ENCODE measurements at regions of chr14 and their contacts with region 1.

Region 1: GRCh38 chr14:95534299-95535225 is at the start of gene GLRX5:
- DNase-seq: peak; percentile 99
- H3K4me3 Mint-ChIP-seq: peak within 1 kb of the TSS; percentile 91
- H3K27ac Mint-ChIP-seq: peak within 1 kb of the TSS; percentile 95
- H3K4me1 Mint-ChIP-seq: peaks cover 49% of the 10 kb centered on the region
- H3K27me3 Mint-ChIP-seq: no peaks in the 10 kb centered on the region
- total RNA-seq, gene GLRX5: 43.7 and 45.6 TPM in 2 replicates

Region 2: GRCh38 chr14:94728950-94729349 is 805.6 kb before region 1 on chr14:
- intact Hi-C with region 1: no loop called
- DNase-seq: no peak
- H3K4me3 Mint-ChIP-seq: no peak overlapping the region
- H3K27ac Mint-ChIP-seq: no peak overlapping the region
- H3K4me1 Mint-ChIP-seq: no peaks in the 10 kb centered on the region
- H3K27me3 Mint-ChIP-seq: peaks cover 5% of the 10 kb centered on the region

Region 3: DNA sequence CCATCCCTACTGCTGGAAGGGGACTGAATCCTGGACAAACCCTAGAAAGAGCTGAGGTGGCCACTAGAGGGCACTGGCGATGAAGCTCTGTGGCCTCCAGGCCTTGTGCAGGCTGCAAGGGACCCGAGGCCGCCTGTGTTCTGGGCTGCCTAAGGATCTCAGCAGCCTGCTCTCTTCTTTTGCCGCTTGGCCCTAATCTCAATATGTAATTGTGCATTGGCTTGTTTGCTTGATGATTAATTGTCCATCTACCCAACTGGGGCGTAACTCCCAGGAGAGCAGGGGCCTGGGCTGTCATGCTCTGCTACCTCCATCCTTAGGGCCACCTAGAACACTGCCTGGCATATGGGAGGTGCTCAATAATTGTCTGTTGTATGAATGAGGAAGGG is 91.9 kb before region 1 on chr14:
- intact Hi-C with region 1: loop called (anchors 1 kb)
- DNase-seq: peak; percentile 91
- H3K4me3 Mint-ChIP-seq: no peak overlapping the region
- H3K27ac Mint-ChIP-seq: peak overlapping the region; percentile 5
- H3K4me1 Mint-ChIP-seq: peaks cover 3% of the 10 kb centered on the region
- H3K27me3 Mint-ChIP-seq: no peaks in the 10 kb centered on the region

Region 4: DNA sequence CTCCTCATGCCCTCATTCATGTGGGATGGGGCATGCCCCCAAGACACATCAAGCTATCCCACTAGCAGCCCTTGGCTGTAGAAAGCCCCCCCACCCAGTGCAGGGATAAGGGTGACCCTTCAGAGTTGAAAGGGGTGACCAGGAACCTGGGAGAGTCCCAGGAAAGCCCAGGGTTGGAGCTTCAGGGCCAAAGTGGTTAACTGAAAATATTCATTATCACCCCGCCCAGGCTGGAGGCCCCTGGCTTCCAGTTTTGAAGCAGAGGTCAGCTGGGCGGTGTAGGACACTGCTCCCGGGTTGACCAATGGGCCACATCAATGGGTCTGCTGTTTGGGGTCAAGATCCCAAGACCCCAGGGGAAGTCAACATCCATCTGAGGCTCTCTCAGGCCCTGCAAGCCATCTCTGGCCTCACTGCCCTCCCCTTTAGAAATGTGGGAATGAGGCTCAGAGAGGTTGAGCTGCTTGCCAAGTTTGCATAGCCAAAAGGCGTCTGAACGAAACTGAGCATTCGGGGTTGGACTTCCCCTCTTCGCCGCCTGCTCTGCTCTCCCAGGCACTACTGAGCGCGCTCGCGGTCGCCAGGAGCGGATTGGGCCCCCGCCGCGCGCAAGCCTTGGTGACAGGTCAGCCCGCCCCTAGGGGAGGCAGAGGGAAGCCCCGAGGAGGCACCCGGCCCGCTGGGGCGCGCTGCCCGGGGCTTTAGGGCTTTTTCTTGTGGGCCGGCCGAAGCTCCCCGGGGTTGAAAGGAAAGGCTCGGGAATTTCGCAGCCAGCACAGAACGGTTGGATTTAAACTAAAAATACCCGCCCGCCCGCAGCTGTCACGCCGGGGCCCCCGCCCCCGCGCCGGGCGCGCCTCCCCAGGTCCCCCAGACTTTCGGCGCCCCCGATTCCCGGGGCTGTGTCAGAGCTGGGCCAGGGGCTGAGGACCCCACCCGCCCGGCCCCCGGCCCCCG is 18.7 kb before region 1 on chr14:
- intact Hi-C with region 1: loop called (anchors 1 kb)
- DNase-seq: peak; percentile 96
- H3K4me3 Mint-ChIP-seq: peak overlapping the region; percentile 95
- H3K27ac Mint-ChIP-seq: peak overlapping the region; percentile 90
- H3K4me1 Mint-ChIP-seq: peaks cover 60% of the 10 kb centered on the region
- H3K27me3 Mint-ChIP-seq: no peaks in the 10 kb centered on the region

Region 5: DNA sequence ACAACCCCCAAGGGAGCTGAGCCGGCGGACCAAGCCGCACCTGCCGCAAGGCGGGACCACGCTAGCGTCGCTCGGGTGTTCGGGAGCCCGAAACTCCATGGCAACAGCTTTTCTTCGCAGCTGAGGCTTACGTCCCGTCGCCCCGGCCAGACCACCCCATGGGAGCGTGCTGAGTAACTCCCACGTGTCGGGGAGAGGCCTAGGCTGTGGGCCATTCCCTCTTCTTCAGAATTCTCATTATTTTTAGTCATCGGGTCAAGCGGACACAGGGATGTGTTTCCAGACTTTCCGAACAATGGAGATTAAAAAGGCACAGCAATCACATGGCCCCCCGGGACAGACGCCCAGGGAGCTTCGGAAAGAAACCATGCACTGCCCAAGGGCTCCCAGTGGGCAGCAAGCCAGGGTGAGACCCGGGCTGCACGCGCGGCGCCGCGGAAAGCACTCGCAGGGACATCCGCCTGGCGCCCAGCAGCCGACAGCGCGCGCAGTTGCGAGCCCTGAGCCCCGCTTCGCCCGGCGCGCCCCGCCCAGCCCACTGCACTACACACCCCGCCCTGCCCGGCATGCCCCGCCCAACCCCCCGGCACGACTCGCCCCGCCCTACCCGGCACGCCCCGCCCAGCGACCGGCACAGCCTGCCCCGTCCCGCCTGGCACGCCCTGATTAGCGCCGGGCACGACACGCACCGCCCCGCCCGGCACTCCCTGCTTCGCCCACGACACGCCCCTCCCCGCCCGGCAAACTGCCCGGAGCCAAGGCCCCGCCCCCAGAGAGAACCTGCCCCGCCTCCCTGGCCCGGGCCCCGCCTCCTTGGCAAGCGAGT is 856.9 kb after region 1 on chr14:
- intact Hi-C with region 1: loop called (anchors 1 kb)
- DNase-seq: peak; percentile 100
- H3K4me3 Mint-ChIP-seq: peak overlapping the region; percentile 91
- H3K27ac Mint-ChIP-seq: peak overlapping the region; percentile 77
- H3K4me1 Mint-ChIP-seq: peaks cover 9% of the 10 kb centered on the region
- H3K27me3 Mint-ChIP-seq: peaks cover 16% of the 10 kb centered on the region

Measured in activated CD4-positive, alpha-beta T cell treated with anti-CD3 and anti-CD28 coated beads, Interleukin-2, amount 10 ng/mL, durations not matched to agents 24 days and 14 days (primary cell).